ENCODE measurements at regions of chr5 and their contacts with region 1.

Region 1: DNA sequence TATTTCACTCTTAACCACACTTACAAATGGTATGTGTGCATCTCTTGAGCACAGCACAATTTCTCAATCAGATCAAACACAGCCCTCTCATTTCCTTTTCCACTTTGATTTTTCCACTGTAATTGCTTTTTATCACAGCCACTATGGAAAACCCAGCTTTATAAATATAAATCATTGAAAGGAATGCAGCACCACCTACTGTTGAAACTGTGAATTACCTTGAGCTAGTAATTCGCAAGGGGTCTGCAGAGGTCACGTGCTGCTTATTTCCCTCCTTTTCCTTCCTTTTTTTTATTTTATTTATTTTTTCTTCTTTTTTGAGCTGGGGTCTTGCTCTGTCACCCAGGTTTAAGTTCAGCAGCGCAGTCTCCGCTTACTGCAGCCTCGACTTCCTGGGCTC is 76.9 kb downstream of the CDH6 start:
- DNase-seq: no peak
- H3K4me3 ChIP-seq: no peak overlapping the region
- H3K27ac ChIP-seq: no peak overlapping the region
- H3K4me1 ChIP-seq: peaks cover 0 to 13% (median 6%) of the 10 kb centered on the region in 4 experiments; a peak in 3 of 7 replicates
- H3K27me3 ChIP-seq: no peaks in the 10 kb centered on the region
- CTCF ChIP-seq: peak in 2 of 3 experiments; percentile 48 to 67; a peak in 2 of 4 replicates
- EP300 ChIP-seq: no peak
- POLR2A ChIP-seq: no peak
- RAD21 ChIP-seq: peak; percentile 74 to 76

Region 2: GRCh38 chr5:31221001-31221400 is 49.4 kb before region 1 on chr5:
- CTCF ChIA-PET with region 1: interaction called, 15 read pairs
- POLR2A ChIA-PET with region 1: no interaction called
- DNase-seq: no peak
- H3K4me3 ChIP-seq: no peak overlapping the region
- H3K27ac ChIP-seq: no peak overlapping the region
- H3K4me1 ChIP-seq: no peaks in the 10 kb centered on the region
- H3K27me3 ChIP-seq: no peaks in the 10 kb centered on the region
- CTCF ChIP-seq: no peak
- EP300 ChIP-seq: no peak
- POLR2A ChIP-seq: no peak
- RAD21 ChIP-seq: no peak

Region 3: DNA sequence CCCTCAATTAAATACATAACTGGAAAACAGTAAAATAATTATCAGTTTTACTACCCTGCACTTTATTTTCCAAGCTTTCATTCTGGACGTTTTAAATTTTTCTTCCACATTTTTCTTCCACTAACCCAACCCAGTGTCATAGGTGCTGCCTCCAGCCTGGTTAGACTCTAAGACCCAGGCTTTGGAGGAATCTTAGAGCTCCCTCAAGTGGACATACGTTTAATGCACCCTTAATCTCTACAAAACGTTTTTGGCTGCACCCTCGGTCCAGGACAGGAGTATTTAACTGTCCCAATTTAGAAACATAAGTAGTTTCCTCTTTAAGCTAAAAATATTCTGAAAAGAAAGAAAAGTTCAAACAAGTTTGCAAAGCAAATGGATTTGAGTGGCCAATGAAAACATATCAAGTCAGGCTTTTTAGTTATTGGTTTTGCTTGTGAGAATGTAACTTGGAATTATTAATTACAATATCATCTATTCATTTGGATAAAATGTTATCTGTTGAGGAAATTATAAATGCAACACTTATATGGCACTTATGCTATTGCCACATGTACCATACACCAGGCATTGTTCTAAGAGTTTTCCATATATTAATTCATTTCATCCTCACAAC is 38.0 kb before region 1 on chr5:
- CTCF ChIA-PET with region 1: interaction called, 67 read pairs
- POLR2A ChIA-PET with region 1: no interaction called
- DNase-seq: peak in 1 of 2 experiments; percentile 2
- H3K4me3 ChIP-seq: no peak overlapping the region
- H3K27ac ChIP-seq: no peak overlapping the region
- H3K4me1 ChIP-seq: peaks cover 0 to 3% (median 0%) of the 10 kb centered on the region in 4 experiments; a peak in 1 of 7 replicates
- H3K27me3 ChIP-seq: no peaks in the 10 kb centered on the region
- CTCF ChIP-seq: peak in 2 of 3 experiments; percentile 75; a peak in 3 of 4 replicates
- EP300 ChIP-seq: no peak
- POLR2A ChIP-seq: no peak
- RAD21 ChIP-seq: peak; percentile 90 to 96

Region 4: GRCh38 chr5:31251032-31251431 is 19.4 kb before region 1 on chr5:
- CTCF ChIA-PET with region 1: interaction called, 23 read pairs
- POLR2A ChIA-PET with region 1: no interaction called
- DNase-seq: no peak
- H3K4me3 ChIP-seq: no peak overlapping the region
- H3K27ac ChIP-seq: no peak overlapping the region
- H3K4me1 ChIP-seq: no peaks in the 10 kb centered on the region
- H3K27me3 ChIP-seq: no peaks in the 10 kb centered on the region
- CTCF ChIP-seq: peak in 2 of 3 experiments; percentile 2 to 33; a peak in 1 of 4 replicates
- EP300 ChIP-seq: no peak
- POLR2A ChIP-seq: no peak
- RAD21 ChIP-seq: peak; percentile 24 to 46; a peak in 3 of 4 replicates

Region 5: DNA sequence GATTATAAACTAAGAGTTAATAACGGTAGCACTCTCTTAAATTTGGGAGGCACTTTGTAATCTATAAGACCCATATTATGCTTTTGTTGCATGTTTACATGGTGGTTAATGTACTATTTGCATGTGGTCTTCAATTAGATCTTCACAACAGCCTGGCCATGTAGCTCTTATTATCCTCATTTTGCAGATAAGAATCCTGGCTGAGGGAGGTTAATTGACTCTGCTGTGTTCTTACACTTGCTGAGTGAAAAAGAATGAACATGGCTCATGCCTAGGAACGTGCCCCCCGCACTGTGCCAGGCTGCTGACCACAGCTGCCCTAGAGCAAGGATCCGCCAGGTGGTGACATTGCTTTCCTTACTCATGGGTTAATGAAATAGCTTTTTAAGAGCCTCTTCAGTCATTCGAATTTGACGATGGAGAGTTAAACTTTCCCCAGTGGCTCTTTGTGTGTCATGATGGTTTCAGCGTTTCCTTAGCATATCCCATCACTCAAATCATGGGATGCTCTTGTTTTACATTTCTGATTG is 21.0 kb after region 1 on chr5:
- CTCF ChIA-PET with region 1: interaction called, 12 read pairs
- POLR2A ChIA-PET with region 1: no interaction called
- DNase-seq: peak in 1 of 2 experiments; percentile 29
- H3K4me3 ChIP-seq: no peak overlapping the region
- H3K27ac ChIP-seq: no peak overlapping the region
- H3K4me1 ChIP-seq: peaks cover 0 to 5% (median 0%) of the 10 kb centered on the region in 4 experiments; a peak in 1 of 7 replicates
- H3K27me3 ChIP-seq: no peaks in the 10 kb centered on the region
- CTCF ChIP-seq: peak; percentile 40 to 60 (median 56); a peak in 3 of 4 replicates
- EP300 ChIP-seq: no peak
- POLR2A ChIP-seq: no peak
- RAD21 ChIP-seq: peak; percentile 58 to 65

Region 6: DNA sequence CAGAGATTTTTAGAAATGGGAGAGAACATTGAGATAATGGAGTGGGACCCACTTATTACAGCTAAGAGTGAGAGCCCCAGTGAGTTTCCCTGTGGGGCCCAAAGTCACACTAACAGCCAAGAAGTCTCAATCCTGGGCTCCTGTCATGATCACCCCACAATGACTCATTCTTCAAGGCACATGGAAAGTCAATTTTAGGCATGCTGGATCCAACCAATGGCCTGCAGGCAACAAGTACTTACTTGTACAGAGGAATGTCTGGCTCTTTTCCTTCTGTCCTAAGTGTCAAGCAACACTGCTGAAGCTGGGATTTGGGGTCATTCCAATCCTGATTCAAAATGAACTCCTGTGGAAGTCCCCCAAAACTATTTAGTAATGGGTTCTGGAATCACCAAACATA is 138.4 kb after region 1 on chr5:
- CTCF ChIA-PET with region 1: no interaction called
- POLR2A ChIA-PET with region 1: no interaction called
- DNase-seq: no peak
- H3K4me3 ChIP-seq: no peak overlapping the region
- H3K27ac ChIP-seq: no peak overlapping the region
- H3K4me1 ChIP-seq: no peaks in the 10 kb centered on the region
- H3K27me3 ChIP-seq: no peaks in the 10 kb centered on the region
- CTCF ChIP-seq: no peak
- EP300 ChIP-seq: no peak
- POLR2A ChIP-seq: no peak
- RAD21 ChIP-seq: no peak

Region 7: GRCh38 chr5:31671339-31671741 is 400.9 kb after region 1 on chr5:
- CTCF ChIA-PET with region 1: no interaction called
- POLR2A ChIA-PET with region 1: no interaction called
- DNase-seq: no peak
- H3K4me3 ChIP-seq: no peak overlapping the region
- H3K27ac ChIP-seq: no peak overlapping the region
- H3K4me1 ChIP-seq: peaks cover 2 to 8% (median 3%) of the 10 kb centered on the region in 4 experiments; a peak in 6 of 7 replicates
- H3K27me3 ChIP-seq: no peaks in the 10 kb centered on the region
- CTCF ChIP-seq: no peak
- EP300 ChIP-seq: no peak
- POLR2A ChIP-seq: peak in 1 of 2 experiments; percentile 53; a peak in 1 of 3 replicates
- RAD21 ChIP-seq: no peak

Measured in H1 (cell line).